PC-3 (cell line): ENCODE measurements at regions of chr20 and their contacts with region 1.

Region 1: GRCh38 chr20:40990542-40991120 is 38.0 kb upstream of the TOP1 start:
- DNase-seq: peak; percentile 92
- ATAC-seq: peak; percentile 99
- H3K4me3 ChIP-seq: no peak overlapping the region
- H3K27ac ChIP-seq: no peak overlapping the region
- H3K4me1 ChIP-seq: peaks cover 13% of the 10 kb centered on the region
- H3K27me3 ChIP-seq: no peaks in the 10 kb centered on the region
- CTCF ChIP-seq: peak; percentile 91

Region 2: GRCh38 chr20:40741507-40742106 is 249.0 kb before region 1 on chr20:
- CTCF ChIA-PET with region 1: no interaction called
- POLR2A ChIA-PET with region 1: no interaction called
- intact Hi-C with region 1: no loop called
- DNase-seq: peak; percentile 59
- ATAC-seq: peak; percentile 53; the same call in 1 of the 2 replicates
- H3K4me3 ChIP-seq: no peak overlapping the region
- H3K27ac ChIP-seq: no peak overlapping the region
- H3K4me1 ChIP-seq: no peaks in the 10 kb centered on the region
- H3K27me3 ChIP-seq: peaks cover 63% of the 10 kb centered on the region
- CTCF ChIP-seq: peak; percentile 78

Region 3: DNA sequence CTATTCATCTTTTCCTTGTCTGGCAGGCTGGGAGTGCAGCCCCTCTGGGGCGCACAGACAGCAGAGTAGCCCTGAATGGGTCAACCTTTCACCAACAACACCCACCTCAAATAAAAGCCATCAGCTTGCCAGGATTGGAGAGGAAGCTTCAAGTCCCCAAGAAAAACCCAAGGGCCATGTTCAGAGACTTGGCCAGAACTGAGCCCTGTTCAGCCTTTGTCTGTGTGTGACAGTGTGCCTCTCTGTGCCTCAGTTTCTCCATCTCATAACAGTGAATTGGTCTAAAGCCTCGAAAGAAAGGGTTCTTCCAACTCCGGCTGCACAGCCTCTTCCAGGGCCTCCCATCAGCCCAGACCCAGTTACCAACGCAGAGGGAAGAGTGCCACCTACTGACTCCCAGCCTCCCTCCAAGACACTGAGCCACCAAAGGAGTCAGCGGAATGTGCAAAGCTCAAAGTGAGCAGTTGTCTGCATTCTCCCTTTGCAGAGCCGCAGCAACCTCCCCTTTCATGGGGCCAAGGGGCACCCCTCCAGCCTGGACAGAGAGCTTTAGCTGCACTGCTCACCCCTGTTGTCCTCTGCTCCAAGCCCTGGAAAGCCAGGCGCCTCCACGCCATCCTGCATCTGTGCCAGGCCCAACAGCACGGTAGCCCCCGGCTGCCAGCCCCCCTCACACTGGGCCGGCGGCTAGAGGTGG is 44.7 kb before region 1 on chr20:
- CTCF ChIA-PET with region 1: no interaction called
- POLR2A ChIA-PET with region 1: no interaction called
- intact Hi-C with region 1: no loop called
- DNase-seq: peak; percentile 68
- ATAC-seq: peak; percentile 78
- H3K4me3 ChIP-seq: no peak overlapping the region
- H3K27ac ChIP-seq: no peak overlapping the region
- H3K4me1 ChIP-seq: peaks cover 15% of the 10 kb centered on the region
- H3K27me3 ChIP-seq: no peaks in the 10 kb centered on the region
- CTCF ChIP-seq: peak; percentile 80

Region 4: DNA sequence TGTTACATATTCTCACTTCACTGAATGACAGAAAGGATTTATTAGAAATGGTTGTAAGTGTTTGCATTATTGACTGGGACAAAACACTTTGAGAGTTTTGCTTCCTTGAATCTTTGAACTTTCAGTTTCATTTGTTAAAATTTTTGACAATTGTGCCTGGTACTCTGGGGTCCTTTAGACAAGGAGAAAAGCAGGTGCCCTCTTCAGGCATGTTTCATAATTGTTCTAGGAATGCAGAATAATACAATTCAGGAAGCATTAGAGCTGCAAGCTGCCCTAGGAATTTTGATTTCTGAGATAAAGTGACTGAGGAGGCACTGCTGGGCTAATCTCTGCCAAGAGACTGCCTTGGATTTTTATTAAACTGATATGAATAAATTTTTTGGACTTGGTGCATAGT is 87.7 kb after region 1 on chr20:
- CTCF ChIA-PET with region 1: interaction called, 11 read pairs
- POLR2A ChIA-PET with region 1: no interaction called
- intact Hi-C with region 1: loop called (anchors 1 kb)
- DNase-seq: peak; percentile 71
- ATAC-seq: peak; percentile 74
- H3K4me3 ChIP-seq: no peak overlapping the region
- H3K27ac ChIP-seq: no peak overlapping the region
- H3K4me1 ChIP-seq: peaks cover 13% of the 10 kb centered on the region; the same call in 1 of the 2 replicates
- H3K27me3 ChIP-seq: no peaks in the 10 kb centered on the region
- CTCF ChIP-seq: peak; percentile 73

Region 5: DNA sequence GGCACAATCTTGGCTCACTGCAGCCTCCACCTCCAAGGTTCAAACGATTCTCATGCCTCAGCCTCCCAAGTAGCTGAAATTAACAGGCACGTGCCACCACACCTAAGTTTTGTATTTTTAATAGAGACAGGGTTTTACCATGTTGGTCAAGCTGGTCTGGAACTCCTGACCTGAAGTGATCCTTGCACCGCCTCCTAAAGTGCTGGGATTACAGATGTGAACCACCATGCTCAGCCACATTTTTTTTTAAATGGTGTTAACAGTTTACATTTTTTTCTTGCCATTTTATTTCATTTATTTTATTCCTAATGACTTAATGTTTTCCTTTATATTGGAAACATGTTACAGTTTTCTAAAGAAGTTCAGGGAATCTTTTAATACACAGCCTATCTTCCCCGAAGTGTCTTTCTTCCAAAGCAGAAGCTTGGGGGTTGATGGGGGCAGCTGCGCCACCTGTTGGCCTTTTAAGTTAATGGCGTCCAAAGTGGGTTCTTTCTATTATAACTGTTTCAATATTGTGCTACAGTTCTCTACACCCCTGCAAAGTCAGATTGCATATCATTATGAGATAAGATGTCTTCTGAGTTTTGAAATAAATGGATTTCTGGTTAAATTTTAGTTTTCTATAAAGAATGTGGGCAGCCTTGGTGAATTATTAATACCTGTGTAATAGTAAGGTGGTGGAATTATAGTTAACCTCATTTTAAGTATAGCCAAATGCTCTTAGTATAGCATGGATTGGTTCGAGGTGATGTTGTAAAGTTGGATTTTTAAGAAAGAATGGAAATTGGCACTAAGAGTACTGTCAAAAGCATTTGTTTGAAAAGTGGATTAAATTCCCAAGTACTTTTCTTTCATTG is 104.7 kb after region 1 on chr20:
- CTCF ChIA-PET with region 1: interaction called, 39 read pairs
- POLR2A ChIA-PET with region 1: no interaction called
- intact Hi-C with region 1: loop called (anchors 1 kb)
- DNase-seq: peak; percentile 69
- ATAC-seq: peak; percentile 76
- H3K4me3 ChIP-seq: no peak overlapping the region
- H3K27ac ChIP-seq: no peak overlapping the region
- H3K4me1 ChIP-seq: no peaks in the 10 kb centered on the region
- H3K27me3 ChIP-seq: no peaks in the 10 kb centered on the region
- CTCF ChIP-seq: peak; percentile 96

Region 6: DNA sequence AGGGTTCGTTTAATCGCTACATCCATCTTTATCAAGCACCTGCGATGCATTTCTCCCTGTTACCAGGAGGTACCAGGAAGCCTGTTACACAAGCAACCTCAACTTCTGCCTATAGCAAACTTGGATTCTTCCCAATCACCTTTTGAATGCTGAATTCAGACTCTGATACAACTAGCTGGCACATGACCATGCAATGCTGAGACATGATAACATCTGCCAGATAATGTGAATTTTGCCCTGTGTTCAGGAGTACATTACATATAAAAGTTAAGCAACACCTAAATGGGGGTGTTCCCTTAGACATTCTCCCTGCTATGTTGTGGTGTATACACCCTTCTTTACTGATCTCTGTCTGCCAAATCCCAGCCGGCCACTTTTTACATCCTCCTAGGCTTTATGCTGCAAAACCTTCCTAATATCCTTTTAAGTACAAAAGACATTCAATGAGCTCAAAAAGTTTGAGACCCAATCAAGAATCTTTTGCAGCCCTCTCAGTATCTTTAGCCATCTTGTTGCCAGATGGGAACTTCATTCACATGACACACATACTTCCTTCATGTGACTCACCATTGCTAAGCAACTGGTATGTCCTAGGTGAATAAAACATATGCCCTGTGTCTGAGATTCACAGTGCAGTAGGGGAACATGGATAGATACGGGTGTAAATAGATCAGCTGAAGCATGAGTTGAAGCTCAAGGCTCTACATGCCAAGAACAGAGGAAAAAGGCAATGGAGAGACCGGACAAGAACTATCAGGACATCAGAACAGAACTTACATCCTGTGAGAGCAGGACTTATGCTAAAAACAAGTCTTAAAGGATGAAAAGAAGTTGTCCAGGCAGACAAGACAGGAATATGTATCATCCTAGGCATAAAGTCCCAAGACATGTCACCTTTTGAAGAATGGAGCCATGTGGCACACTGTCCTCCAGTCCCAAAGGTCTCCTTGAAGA is 242.6 kb after region 1 on chr20:
- CTCF ChIA-PET with region 1: no interaction called
- POLR2A ChIA-PET with region 1: no interaction called
- intact Hi-C with region 1: no loop called
- DNase-seq: peak; percentile 79
- ATAC-seq: peak; percentile 72
- H3K4me3 ChIP-seq: no peak overlapping the region; the same call in 1 of the 2 replicates
- H3K27ac ChIP-seq: peak overlapping the region; percentile 10; the same call in 1 of the 2 replicates
- H3K4me1 ChIP-seq: peaks cover 32% of the 10 kb centered on the region
- H3K27me3 ChIP-seq: no peaks in the 10 kb centered on the region
- CTCF ChIP-seq: no peak